Activated CD4-positive, alpha-beta T cell treated with anti-CD3 and anti-CD28 coated beads for 36 hours (primary cell): ENCODE measurements at regions of chr14 and their contacts with region 1.

Region 1: DNA sequence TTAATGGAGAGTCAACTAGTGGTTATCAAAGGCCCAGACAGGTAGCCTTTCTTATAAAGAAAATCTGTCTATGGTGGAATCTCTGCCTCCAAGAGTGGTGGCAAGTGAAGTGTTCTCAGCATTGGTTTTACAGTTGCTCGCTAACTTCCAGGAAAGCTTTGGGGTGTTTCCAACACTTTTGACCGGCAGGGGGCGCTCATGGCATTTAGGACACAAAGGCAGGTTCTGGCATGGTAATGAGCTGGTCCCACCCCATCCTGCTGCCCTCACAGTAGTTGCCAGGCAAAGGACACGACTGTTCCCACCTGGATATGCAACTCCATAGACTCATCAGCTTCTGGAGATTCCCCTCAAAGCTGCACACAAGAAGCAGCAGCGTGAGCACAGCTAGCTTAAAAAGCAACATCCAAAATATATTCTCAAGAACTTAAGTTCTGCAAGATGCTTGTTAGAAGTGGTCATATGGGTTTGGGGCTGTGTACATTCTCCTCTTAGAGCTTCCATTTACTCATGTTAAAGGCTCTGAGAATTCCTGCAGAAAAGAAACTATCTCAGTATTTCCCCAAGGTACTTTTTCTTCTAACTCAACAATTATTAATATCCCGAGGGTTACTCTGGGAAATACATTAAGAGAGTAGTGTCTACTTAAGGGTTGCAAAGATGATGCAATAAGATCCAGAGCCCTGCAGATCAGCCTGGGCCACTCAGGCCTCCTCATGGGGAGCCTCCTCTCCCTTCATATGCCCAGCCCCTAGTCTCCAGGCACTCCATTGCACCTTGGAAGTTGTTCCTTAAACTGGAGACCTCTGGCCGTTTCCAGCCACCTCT is 14.8 kb downstream of the PROX2 start:
- DNase-seq: peak; percentile 96
- ATAC-seq: peak; percentile 93
- H3K4me3 Mint-ChIP-seq: no peak overlapping the region
- H3K27ac Mint-ChIP-seq: no peak overlapping the region
- H3K4me1 Mint-ChIP-seq: peaks cover 7% of the 10 kb centered on the region
- H3K27me3 Mint-ChIP-seq: no peaks in the 10 kb centered on the region

Region 2: DNA sequence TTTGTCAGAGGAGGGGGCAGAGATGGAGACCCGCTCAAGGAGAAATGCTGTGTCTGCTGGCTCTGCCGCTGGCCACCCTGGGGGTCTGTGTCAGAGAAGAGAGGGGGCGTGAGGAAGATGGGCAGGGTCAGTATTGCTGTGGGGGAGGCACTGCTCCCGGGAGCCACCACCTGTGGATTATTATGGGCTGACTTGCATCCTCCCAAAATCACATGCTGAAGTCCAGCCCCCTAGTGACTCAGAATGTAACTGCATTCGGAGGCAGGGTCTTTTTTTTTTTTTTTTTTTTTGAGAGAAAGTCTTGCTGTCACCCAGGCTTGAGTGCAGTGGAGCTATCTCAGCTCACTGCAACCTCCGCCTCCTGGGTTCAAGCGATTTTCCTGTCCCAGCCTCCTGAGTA is 570.7 kb before region 1 on chr14:
- CTCF ChIA-PET with region 1: no interaction called
- POLR2A ChIA-PET with region 1: no interaction called
- intact Hi-C with region 1: no loop called
- DNase-seq: no peak
- ATAC-seq: peak; percentile 42
- H3K4me3 Mint-ChIP-seq: no peak overlapping the region
- H3K27ac Mint-ChIP-seq: no peak overlapping the region
- H3K4me1 Mint-ChIP-seq: no peaks in the 10 kb centered on the region
- H3K27me3 Mint-ChIP-seq: no peaks in the 10 kb centered on the region

Region 3: DNA sequence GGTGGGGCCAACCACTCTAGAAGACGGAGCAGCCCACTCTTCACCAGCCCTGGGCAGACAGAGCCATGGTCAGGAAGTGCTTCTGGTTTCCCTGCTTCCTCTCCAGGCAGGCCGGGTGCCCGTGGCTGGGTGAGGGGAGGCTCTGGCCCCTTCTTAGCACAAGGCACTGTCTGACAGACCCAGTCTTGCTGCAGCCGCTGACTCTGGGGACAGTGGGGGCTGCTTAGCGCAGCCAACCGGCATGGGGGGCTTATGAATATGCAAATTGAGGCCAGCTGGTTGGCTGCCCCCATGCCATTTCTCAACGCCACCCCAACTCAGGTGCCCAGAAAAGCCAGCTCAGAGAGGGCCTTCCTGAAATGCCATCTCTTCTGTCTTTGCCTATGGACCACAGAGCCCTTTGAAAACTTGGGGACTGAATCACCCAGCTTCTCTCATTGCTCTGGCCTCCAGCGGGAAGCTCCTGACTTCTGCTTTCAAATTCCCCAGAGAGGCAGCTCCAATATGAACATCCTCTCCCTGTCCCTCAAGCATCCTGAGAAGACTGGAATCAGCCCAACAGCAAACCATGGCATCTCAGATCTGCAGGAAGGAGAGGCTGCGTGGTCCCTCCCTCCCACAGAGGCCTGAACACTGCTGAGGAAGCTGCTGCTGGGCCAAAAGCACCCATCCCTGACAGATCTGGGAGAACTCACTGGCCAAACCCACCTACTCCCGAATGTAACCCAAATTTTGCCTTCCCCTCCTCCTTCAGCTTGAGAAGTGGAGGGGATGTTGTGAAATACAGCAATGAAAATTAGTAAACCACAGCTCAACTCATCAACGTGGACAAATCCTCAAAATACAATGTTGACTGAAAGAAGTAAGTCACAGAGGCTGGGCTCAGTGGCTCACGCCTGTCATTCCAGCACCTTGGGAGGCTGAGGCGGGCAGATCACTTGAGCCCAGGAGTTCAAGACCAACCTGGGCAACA is 15.1 kb after region 1 on chr14 and contains the start of gene PROX2:
- CTCF ChIA-PET with region 1: interaction called, 88 read pairs
- POLR2A ChIA-PET with region 1: interaction called, 4 read pairs
- intact Hi-C with region 1: loop called in 1 of 2 experiments (anchors 2 kb)
- DNase-seq: peak; percentile 28
- ATAC-seq: peak; percentile 59
- H3K4me3 Mint-ChIP-seq: no peak within 1 kb of the TSS
- H3K27ac Mint-ChIP-seq: peak within 1 kb of the TSS; percentile 78
- H3K4me1 Mint-ChIP-seq: peaks cover 35% of the 10 kb centered on the region
- H3K27me3 Mint-ChIP-seq: no peaks in the 10 kb centered on the region
- total RNA-seq, gene PROX2: 0.11 to 0.23 TPM

Region 4: DNA sequence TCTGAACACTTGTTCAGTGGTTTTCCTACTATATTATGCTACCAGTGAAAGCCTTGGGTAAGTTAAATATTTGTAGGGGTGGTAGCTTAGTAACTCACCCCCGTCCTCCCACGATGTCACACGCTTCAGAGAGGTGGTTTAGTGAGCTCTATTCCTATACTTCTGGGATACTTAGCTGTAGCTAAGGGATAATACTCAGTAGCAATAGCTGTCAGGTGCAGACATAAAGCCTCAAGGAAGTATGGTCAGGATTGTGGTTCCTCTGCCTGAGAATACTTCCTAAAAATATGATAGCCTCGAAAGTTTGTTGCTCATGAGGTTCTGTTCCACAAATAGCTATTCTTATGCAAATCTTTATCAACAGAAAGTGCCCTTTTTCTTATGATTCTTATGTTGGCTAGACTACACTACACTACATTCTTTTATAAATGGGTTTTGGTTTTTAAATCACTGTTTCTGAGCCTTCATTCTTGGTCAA is 32.5 kb after region 1 on chr14:
- CTCF ChIA-PET with region 1: interaction called, 101 read pairs
- POLR2A ChIA-PET with region 1: interaction called, 5 read pairs
- intact Hi-C with region 1: no loop called
- DNase-seq: no peak
- ATAC-seq: no peak
- H3K4me3 Mint-ChIP-seq: no peak overlapping the region
- H3K27ac Mint-ChIP-seq: peak overlapping the region; percentile 12
- H3K4me1 Mint-ChIP-seq: no peaks in the 10 kb centered on the region
- H3K27me3 Mint-ChIP-seq: no peaks in the 10 kb centered on the region

Region 5: DNA sequence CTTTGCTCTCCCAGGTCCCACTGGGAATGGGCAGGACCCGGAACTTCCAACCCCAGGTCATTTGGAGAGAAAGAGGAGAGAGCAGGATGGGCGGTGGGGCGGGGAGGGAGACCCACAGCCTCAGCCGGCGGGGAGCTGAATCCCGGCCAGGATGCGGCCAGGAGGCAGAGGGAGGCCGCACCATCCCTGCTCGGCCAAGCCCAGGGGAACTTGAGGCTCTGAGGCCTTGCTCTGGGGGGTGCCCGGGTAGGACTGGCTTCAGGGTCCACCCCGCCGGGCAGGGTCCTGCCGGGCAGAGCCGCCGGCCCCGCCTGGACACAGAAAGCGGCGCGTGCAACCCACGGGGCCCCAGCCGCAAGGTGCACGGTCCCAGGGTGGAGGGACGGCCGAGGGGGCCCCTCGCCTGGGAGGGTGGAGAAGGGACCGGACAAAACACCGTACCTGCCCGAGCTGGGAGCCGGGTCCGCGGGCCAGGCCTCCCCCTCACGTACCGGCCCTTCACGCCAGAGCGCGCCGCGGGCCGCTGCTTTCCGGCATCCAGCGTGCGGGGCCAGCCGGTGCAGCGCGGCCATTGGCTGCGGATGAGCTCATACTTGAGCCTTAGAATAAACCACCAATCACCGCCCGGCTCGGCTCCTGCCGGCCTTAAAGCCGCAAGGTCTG is 61.8 kb after region 1 on chr14 and contains the start of gene RPS6KL1:
- CTCF ChIA-PET with region 1: interaction called, 15 read pairs
- POLR2A ChIA-PET with region 1: interaction called, 3 read pairs
- intact Hi-C with region 1: no loop called
- DNase-seq: peak; percentile 86
- ATAC-seq: peak; percentile 99
- H3K4me3 Mint-ChIP-seq: peak within 1 kb of the TSS; percentile 66
- H3K27ac Mint-ChIP-seq: peak within 1 kb of the TSS; percentile 39
- H3K4me1 Mint-ChIP-seq: peaks cover 10% of the 10 kb centered on the region
- H3K27me3 Mint-ChIP-seq: peaks cover 6% of the 10 kb centered on the region
- total RNA-seq, gene RPS6KL1: 5.6 to 6.0 TPM

Region 6: DNA sequence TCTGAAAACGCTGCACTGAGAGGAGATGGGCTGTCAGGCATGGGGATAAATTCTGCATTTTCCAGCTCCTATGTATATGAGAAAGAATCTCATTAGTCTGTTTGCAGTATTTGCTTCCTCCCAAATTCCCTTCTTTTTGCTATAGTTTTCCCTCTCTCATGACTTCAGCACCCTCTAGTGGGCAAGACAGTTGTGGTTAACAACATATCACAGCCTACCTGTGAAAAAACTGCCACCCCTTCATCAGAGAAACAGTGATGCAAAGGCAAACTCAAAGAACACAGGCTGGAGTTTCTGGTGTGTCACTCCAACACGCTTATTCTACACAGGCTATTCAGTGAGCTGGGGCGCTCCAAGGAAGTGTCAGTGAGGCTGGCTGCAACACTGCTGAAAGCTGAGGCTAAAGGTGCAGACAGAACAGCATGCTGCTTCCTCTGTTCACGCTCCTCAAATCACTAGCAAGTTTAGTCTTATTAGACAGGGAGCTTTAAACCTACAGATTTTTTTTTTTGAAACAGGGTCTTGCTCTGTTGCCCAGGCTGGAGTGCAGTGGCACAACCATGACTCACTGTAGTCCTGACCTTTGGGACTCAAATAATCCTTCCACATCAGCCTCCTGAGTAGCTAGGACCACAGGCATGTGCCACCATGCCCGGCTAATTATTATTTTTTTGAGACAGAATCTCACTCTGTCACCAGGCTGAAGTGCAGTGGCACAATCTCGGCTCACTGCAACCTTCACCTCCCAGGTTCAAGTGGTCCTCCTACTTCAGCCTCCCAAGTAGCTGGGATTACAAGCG is 227.7 kb after region 1 on chr14:
- CTCF ChIA-PET with region 1: interaction called, 59 read pairs
- POLR2A ChIA-PET with region 1: no interaction called
- intact Hi-C with region 1: loop called (anchors 1 kb)
- DNase-seq: peak; percentile 54
- ATAC-seq: peak; percentile 64
- H3K4me3 Mint-ChIP-seq: no peak overlapping the region
- H3K27ac Mint-ChIP-seq: no peak overlapping the region
- H3K4me1 Mint-ChIP-seq: no peaks in the 10 kb centered on the region
- H3K27me3 Mint-ChIP-seq: no peaks in the 10 kb centered on the region